MCF 10A (cell line): ENCODE measurements at regions of chr10 and their contacts with region 1.

Region 1: DNA sequence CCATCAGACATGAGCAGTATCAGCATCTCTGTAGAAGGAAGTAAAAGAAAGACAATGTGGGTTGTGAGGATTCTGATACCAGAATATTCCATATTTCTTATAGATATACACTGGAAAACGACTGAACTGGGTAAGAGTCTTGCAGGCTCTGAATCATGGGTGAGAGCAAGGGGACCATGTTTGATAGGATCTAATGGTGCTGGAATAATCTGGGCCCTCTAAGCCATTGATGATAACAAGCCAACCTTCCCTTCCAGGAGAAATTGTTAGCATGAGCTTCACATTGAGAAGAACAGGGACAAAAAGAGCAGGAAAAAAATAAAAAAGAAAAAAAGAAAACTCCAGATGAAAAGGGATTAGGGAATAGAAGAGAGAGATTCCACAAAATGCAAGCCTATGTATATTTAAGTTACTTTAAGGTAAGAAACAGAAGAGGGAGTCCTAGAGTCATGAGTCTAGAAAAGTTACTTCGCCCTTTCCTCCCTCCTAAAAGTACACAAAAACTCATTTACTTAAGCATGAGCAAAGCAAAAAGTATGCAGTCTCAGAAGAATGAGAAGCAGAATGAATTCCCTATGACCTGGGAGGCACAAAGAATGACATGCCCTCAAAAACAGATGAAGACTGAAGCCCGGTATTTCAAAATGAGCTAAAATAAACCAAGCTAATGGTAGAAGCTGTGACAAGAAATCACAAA is 181.9 kb downstream of the TMEM26 start:
- DNase-seq: peak; percentile 47
- H3K4me3 Mint-ChIP-seq: no peak overlapping the region
- H3K27ac Mint-ChIP-seq: peak overlapping the region; percentile 39
- H3K4me1 Mint-ChIP-seq: peaks cover 10% of the 10 kb centered on the region
- H3K27me3 Mint-ChIP-seq: no peaks in the 10 kb centered on the region
- CTCF ChIP-seq: peak; percentile 27

Region 2: DNA sequence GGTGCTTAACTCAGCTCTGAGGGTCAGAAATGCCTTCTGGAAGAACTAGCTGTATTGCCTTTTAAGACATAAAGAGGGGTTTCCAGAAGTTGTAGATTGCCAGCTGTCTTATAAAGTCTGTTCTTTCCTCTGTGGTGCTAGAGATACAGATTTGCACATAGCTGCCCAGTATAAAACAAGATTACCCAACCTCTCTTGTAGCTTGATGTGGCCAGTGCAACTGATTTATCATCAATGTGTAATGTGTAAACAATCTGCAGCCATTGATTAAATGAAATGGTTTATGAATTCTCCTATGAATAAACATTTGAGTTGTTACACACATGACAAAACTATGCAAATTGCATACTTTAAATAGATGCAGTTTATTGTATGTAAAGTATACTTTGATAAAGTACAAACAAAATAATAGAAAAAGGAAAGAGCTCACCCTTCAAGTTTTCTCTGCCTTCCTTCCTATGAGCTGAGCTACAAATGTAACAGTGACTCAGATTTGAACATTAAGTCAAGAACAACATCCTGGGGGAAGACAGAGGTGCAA is 13.2 kb before region 1 on chr10:
- CTCF ChIA-PET with region 1: interaction called, 10 read pairs
- POLR2A ChIA-PET with region 1: no interaction called
- intact Hi-C with region 1: no loop called
- DNase-seq: no peak
- H3K4me3 Mint-ChIP-seq: no peak overlapping the region
- H3K27ac Mint-ChIP-seq: no peak overlapping the region
- H3K4me1 Mint-ChIP-seq: peaks cover 6% of the 10 kb centered on the region
- H3K27me3 Mint-ChIP-seq: peaks cover 8% of the 10 kb centered on the region
- CTCF ChIP-seq: no peak

Region 3: DNA sequence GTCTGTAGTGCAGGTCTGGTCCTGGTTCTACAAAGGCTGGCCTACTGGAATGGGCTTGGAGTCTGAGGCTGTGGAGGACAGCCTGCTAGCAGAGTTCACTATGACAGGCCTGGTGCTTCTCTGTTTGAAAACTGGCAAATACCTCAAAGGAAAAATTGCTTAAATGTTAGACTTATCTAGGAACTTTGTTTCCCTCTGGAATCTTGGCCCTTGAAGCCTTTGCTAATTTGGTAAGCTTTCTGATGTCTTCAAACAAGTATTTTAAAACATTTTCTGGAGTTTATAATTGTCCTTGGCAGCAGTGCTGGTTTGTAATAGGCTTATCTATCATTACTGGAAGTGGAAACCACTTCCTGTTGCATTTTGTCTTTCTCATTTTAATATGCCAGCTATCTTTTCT is 42.2 kb after region 1 on chr10:
- CTCF ChIA-PET with region 1: no interaction called
- POLR2A ChIA-PET with region 1: no interaction called
- intact Hi-C with region 1: no loop called
- DNase-seq: no peak
- H3K4me3 Mint-ChIP-seq: no peak overlapping the region
- H3K27ac Mint-ChIP-seq: no peak overlapping the region
- H3K4me1 Mint-ChIP-seq: peaks cover 5% of the 10 kb centered on the region
- H3K27me3 Mint-ChIP-seq: no peaks in the 10 kb centered on the region
- CTCF ChIP-seq: no peak

Region 4: GRCh38 chr10:61708846-61709245 is 437.6 kb after region 1 on chr10:
- CTCF ChIA-PET with region 1: no interaction called
- POLR2A ChIA-PET with region 1: no interaction called
- intact Hi-C with region 1: no loop called
- DNase-seq: no peak
- H3K4me3 Mint-ChIP-seq: no peak overlapping the region
- H3K27ac Mint-ChIP-seq: no peak overlapping the region
- H3K4me1 Mint-ChIP-seq: no peaks in the 10 kb centered on the region
- H3K27me3 Mint-ChIP-seq: no peaks in the 10 kb centered on the region
- CTCF ChIP-seq: no peak